ENCODE measurements at regions of chr18 and their contacts with region 1.

Region 1: DNA sequence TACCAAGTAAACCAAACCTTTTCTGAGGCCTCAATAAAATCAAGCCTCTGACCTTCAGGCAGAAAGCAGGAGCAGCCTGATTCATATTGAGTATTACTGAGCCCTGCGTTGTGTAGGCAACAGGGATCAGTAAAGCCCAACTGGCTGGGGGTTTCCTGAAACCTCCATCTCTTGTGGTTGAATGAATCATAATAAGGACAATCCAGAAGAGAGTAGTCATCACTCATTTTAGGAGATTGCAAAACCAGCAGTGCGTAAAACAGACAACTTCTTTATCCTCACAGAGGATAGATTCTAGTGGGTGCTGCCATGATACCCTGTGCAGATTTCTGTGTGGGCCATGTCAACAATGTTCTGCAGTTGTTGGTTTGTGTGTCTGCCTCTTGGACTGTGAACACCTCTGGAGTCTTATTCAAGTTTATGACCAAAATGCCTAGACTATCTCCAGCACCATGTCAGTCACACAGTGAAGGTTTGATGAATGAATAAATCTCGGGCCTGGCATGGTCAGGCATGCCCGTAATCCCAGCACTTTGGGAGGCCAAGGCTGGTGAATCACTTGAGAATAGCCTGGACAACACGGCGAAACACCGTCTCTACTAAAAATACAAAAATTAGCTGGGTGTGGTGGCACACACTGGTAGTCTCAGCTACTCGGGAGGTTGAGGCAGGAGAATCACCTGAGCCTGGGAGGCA is 51.8 kb upstream of the RAB27B start:
- DNase-seq: peak; percentile 99
- ATAC-seq: peak; percentile 93
- H3K4me3 ChIP-seq: no peak overlapping the region
- H3K27ac ChIP-seq: peak overlapping the region; percentile 86
- H3K4me1 ChIP-seq: peaks cover 16% of the 10 kb centered on the region
- H3K27me3 ChIP-seq: no peaks in the 10 kb centered on the region
- CTCF ChIP-seq: no peak
- POLR2A ChIP-seq: no peak; the same call in 1 of the 2 replicates
- RAD21 ChIP-seq: 0 out of 2 replicates have a peak, but pooled peaks have one; percentile 2

Region 2: GRCh38 chr18:54679318-54680149 is 96.9 kb before region 1 on chr18:
- CTCF ChIA-PET with region 1: interaction called, 3 read pairs
- POLR2A ChIA-PET with region 1: no interaction called
- dilution Hi-C with region 1: no loop called
- in situ Hi-C with region 1: no loop called
- intact Hi-C with region 1: loop called (anchors 1 kb)
- DNase-seq: peak; percentile 83
- ATAC-seq: peak; percentile 95
- H3K4me3 ChIP-seq: no peak overlapping the region
- H3K27ac ChIP-seq: no peak overlapping the region
- H3K4me1 ChIP-seq: no peaks in the 10 kb centered on the region
- H3K27me3 ChIP-seq: no peaks in the 10 kb centered on the region
- CTCF ChIP-seq: peak; percentile 84
- POLR2A ChIP-seq: no peak
- RAD21 ChIP-seq: peak; percentile 93

Region 3: GRCh38 chr18:54690198-54690597 is 86.2 kb before region 1 on chr18:
- CTCF ChIA-PET with region 1: no interaction called
- POLR2A ChIA-PET with region 1: no interaction called
- dilution Hi-C with region 1: no loop called
- in situ Hi-C with region 1: no loop called
- intact Hi-C with region 1: loop called (anchors 5 kb)
- DNase-seq: peak; percentile 73
- ATAC-seq: peak; percentile 62; the same call in 1 of the 2 replicates
- H3K4me3 ChIP-seq: peak overlapping the region; percentile 23; the same call in 1 of the 2 replicates
- H3K27ac ChIP-seq: no peak overlapping the region
- H3K4me1 ChIP-seq: no peaks in the 10 kb centered on the region
- H3K27me3 ChIP-seq: no peaks in the 10 kb centered on the region
- CTCF ChIP-seq: no peak
- POLR2A ChIP-seq: no peak
- RAD21 ChIP-seq: no peak

Region 4: GRCh38 chr18:54742659-54743604 is 33.5 kb before region 1 on chr18:
- CTCF ChIA-PET with region 1: no interaction called
- POLR2A ChIA-PET with region 1: no interaction called
- dilution Hi-C with region 1: no loop called
- in situ Hi-C with region 1: no loop called
- intact Hi-C with region 1: loop called (anchors 2 kb)
- DNase-seq: peak; percentile 99
- ATAC-seq: peak; percentile 78
- H3K4me3 ChIP-seq: no peak overlapping the region
- H3K27ac ChIP-seq: no peak overlapping the region
- H3K4me1 ChIP-seq: peaks cover 13% of the 10 kb centered on the region
- H3K27me3 ChIP-seq: no peaks in the 10 kb centered on the region
- CTCF ChIP-seq: no peak
- POLR2A ChIP-seq: no peak
- RAD21 ChIP-seq: 0 out of 2 replicates have a peak, but pooled peaks have one; percentile 2

Region 5: GRCh38 chr18:54888933-54889332 is 112.5 kb after region 1 on chr18:
- CTCF ChIA-PET with region 1: no interaction called
- POLR2A ChIA-PET with region 1: no interaction called
- dilution Hi-C with region 1: no loop called
- in situ Hi-C with region 1: no loop called
- intact Hi-C with region 1: no loop called
- DNase-seq: peak; percentile 79
- ATAC-seq: peak; percentile 66
- H3K4me3 ChIP-seq: no peak overlapping the region
- H3K27ac ChIP-seq: no peak overlapping the region
- H3K4me1 ChIP-seq: peaks cover 2% of the 10 kb centered on the region; the same call in 1 of the 2 replicates
- H3K27me3 ChIP-seq: no peaks in the 10 kb centered on the region; the same call in 1 of the 2 replicates
- CTCF ChIP-seq: no peak
- POLR2A ChIP-seq: no peak
- RAD21 ChIP-seq: no peak

Region 6: GRCh38 chr18:54961016-54961423 is 184.6 kb after region 1 on chr18:
- CTCF ChIA-PET with region 1: no interaction called
- POLR2A ChIA-PET with region 1: no interaction called
- dilution Hi-C with region 1: no loop called
- in situ Hi-C with region 1: loop called (anchors 5 kb)
- intact Hi-C with region 1: loop called (anchors 5 kb)
- DNase-seq: peak; percentile 88
- ATAC-seq: peak; percentile 65
- H3K4me3 ChIP-seq: no peak overlapping the region
- H3K27ac ChIP-seq: peak overlapping the region; percentile 49; the same call in 1 of the 2 replicates
- H3K4me1 ChIP-seq: peaks cover 8% of the 10 kb centered on the region
- H3K27me3 ChIP-seq: no peaks in the 10 kb centered on the region
- CTCF ChIP-seq: no peak
- POLR2A ChIP-seq: no peak
- RAD21 ChIP-seq: no peak

Region 7: DNA sequence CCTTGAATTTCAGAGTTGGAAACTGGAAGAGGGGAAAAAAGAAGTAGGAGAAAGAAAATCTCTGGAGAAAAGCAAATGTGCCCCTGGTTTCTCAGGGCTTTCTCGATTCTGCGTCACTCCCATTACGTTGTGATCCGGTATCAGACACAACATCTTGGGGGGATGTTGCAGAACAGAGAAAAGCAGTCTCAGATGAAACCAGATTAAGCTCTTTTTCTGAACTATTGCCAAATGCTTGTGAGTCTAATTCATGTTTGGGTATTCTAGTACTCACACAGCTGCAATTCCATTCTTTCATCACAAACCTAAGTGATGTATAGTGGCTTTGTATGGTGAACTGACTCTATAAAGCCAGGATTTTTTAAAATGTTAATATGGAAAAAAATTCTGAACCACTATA is 578.4 kb after region 1 on chr18:
- CTCF ChIA-PET with region 1: no interaction called
- POLR2A ChIA-PET with region 1: no interaction called
- dilution Hi-C with region 1: no loop called
- in situ Hi-C with region 1: no loop called
- intact Hi-C with region 1: no loop called
- DNase-seq: peak; percentile 66
- ATAC-seq: peak; percentile 37; the same call in 1 of the 2 replicates
- H3K4me3 ChIP-seq: no peak overlapping the region
- H3K27ac ChIP-seq: no peak overlapping the region
- H3K4me1 ChIP-seq: peaks cover 8% of the 10 kb centered on the region
- H3K27me3 ChIP-seq: no peaks in the 10 kb centered on the region
- CTCF ChIP-seq: no peak
- POLR2A ChIP-seq: no peak
- RAD21 ChIP-seq: no peak

Region 8: GRCh38 chr18:55494441-55494840 is 718.0 kb after region 1 on chr18:
- CTCF ChIA-PET with region 1: interaction called, 11 read pairs
- POLR2A ChIA-PET with region 1: no interaction called
- dilution Hi-C with region 1: no loop called
- in situ Hi-C with region 1: no loop called
- intact Hi-C with region 1: no loop called
- DNase-seq: no peak
- ATAC-seq: no peak
- H3K4me3 ChIP-seq: no peak overlapping the region
- H3K27ac ChIP-seq: no peak overlapping the region
- H3K4me1 ChIP-seq: peaks cover 16% of the 10 kb centered on the region; the same call in 1 of the 2 replicates
- H3K27me3 ChIP-seq: no peaks in the 10 kb centered on the region
- CTCF ChIP-seq: no peak
- POLR2A ChIP-seq: no peak
- RAD21 ChIP-seq: no peak